Right ventricle myocardium superior (tissue), 1 donor: ENCODE measurements at regions of chr14 and their contacts with region 1.

Region 1: GRCh38 chr14:55446218-55446654 is 5.8 kb upstream of the TBPL2 start:
- DNase-seq: no peak
- ATAC-seq: peak; percentile 80

Region 2: GRCh38 chr14:55671641-55672040 is 225.4 kb after region 1 on chr14:
- intact Hi-C with region 1: loop called (anchors 10 kb)
- DNase-seq: no peak
- ATAC-seq: no peak

Region 3: DNA sequence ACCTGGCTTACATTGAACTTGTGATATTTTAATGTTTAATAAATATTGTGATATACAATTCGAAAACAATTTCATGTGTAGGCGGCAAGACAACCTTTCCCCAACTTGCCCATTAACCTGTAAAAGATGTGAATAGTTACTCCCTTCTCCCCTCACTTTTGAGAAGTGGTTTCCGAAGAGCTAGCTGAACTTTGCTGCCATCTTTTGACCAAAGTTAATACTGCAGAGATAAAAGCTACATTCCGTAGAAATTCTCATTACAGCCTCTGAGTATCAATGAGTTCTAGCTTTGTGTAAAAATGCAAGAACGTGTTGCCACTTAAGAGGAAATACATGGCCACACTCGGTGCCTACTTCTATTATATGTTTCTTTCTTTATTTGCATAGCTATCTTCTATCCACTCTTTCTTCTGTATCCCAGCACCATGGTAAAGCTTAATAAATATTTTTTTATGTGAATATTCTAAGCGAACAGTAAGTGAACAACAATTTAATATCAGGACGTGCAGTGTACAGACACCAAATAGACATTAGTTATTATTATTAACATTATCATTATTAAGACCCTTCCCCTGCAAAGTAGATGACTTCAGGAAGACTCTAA is 1028.3 kb after region 1 on chr14:
- intact Hi-C with region 1: loop called (anchors 5 kb)
- DNase-seq: no peak
- ATAC-seq: no peak